Activated CD4-positive, alpha-beta memory T cell treated with anti-CD3 and anti-CD28 coated beads for 36 hours (primary cell): ENCODE measurements at regions of chr1 and their contacts with region 1.

Region 1: GRCh38 chr1:161801955-161802354 is 35.8 kb downstream of the ATF6 start:
- DNase-seq: no peak
- H3K4me3 Mint-ChIP-seq: no peak overlapping the region
- H3K27ac Mint-ChIP-seq: no peak overlapping the region
- H3K4me1 Mint-ChIP-seq: peaks cover 25% of the 10 kb centered on the region
- H3K27me3 Mint-ChIP-seq: no peaks in the 10 kb centered on the region

Region 2: GRCh38 chr1:161816201-161816600 is 14.2 kb after region 1 on chr1:
- CTCF ChIA-PET with region 1: no interaction called
- POLR2A ChIA-PET with region 1: no interaction called
- intact Hi-C with region 1: loop called (anchors 1 kb)
- DNase-seq: no peak
- H3K4me3 Mint-ChIP-seq: no peak overlapping the region
- H3K27ac Mint-ChIP-seq: no peak overlapping the region
- H3K4me1 Mint-ChIP-seq: no peaks in the 10 kb centered on the region
- H3K27me3 Mint-ChIP-seq: no peaks in the 10 kb centered on the region